CD4-positive, alpha-beta T cell (primary cell): ENCODE measurements at regions of chr1 and their contacts with region 1.

Region 1: DNA sequence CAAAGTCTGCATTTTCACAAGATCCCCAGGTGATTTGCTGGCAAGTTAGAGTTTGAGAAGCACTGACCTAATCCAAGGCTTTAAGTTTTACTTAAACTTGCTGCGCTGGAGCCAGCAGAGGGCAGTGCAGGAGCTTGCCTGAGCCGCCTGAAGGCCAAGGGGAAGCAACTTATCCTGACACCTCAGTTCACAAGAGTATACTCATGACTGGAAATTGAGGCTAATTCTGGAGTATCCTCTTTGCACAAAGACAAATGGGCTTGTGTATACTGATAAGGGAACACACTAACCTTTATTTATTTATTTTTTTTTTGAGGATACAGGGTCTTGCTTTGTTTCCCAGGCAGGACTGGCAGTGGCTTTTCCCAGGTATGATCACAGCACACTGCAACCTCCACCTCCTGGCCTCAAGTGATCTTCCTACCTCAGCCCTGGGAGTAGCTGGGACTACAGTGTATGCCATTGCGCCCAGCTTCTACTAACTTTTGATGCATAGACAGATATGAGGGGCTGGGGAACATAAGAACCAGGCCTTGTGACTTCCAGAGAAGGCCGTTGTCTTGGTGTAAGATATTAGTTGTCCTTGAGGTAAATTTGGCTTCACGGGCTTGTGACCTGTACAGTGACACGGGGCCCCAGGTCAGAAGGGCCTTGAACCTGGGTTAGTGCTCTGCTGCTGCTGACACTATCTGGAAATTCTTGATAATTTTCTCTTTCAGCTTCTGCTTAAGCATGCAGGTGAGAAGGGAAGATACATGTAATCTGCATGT is 29.0 kb upstream of the SLAMF1 start:
- DNase-seq: peak; percentile 57 to 88 (median 72)
- ATAC-seq: peak; percentile 80
- H3K4me3 ChIP-seq: no peak overlapping the region
- H3K4me3 Mint-ChIP-seq: peak overlapping the region; percentile 42
- H3K27ac ChIP-seq: peak overlapping the region; percentile 37 to 38
- H3K27ac Mint-ChIP-seq: no peak overlapping the region
- H3K4me1 ChIP-seq: peaks cover 40% of the 10 kb centered on the region
- H3K4me1 Mint-ChIP-seq: peaks cover 5% of the 10 kb centered on the region
- H3K27me3 ChIP-seq: no peaks in the 10 kb centered on the region
- H3K27me3 Mint-ChIP-seq: no peaks in the 10 kb centered on the region
- CTCF ChIP-seq: peak; percentile 79

Region 2: DNA sequence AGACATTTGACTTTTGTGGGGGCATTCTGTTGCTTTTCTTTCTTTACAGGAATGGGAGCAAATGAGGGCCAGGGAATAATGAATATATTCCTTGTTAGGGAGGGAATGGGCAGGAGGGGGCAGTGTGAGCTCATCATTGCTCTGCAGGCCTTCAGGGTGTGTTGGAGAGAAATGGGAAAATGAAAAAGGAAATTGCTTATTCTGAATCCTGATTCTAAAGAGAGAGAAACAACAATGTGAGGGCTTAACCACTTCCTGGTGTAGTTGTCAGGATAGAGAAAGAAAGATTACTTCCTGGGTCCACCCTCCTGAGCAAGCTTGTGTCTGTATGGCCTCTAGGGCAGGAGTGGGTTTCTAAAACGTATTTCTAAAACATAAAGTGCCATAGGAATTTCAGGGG is 247.2 kb before region 1 on chr1:
- CTCF ChIA-PET with region 1: interaction called, 4 read pairs
- POLR2A ChIA-PET with region 1: interaction called, 5 read pairs
- intact Hi-C with region 1: loop called in 1 of 2 experiments (anchors 5 kb)
- DNase-seq: peak in 10 of 14 experiments; percentile 15 to 82 (median 42)
- ATAC-seq: peak; percentile 76
- H3K4me3 ChIP-seq: no peak overlapping the region
- H3K4me3 Mint-ChIP-seq: peak overlapping the region; percentile 72
- H3K27ac ChIP-seq: peak overlapping the region; percentile 47 to 74
- H3K27ac Mint-ChIP-seq: peak overlapping the region; percentile 88
- H3K4me1 ChIP-seq: peaks cover 52% of the 10 kb centered on the region
- H3K4me1 Mint-ChIP-seq: peaks cover 63% of the 10 kb centered on the region
- H3K27me3 ChIP-seq: no peaks in the 10 kb centered on the region
- H3K27me3 Mint-ChIP-seq: no peaks in the 10 kb centered on the region
- CTCF ChIP-seq: peak; percentile 86

Region 3: DNA sequence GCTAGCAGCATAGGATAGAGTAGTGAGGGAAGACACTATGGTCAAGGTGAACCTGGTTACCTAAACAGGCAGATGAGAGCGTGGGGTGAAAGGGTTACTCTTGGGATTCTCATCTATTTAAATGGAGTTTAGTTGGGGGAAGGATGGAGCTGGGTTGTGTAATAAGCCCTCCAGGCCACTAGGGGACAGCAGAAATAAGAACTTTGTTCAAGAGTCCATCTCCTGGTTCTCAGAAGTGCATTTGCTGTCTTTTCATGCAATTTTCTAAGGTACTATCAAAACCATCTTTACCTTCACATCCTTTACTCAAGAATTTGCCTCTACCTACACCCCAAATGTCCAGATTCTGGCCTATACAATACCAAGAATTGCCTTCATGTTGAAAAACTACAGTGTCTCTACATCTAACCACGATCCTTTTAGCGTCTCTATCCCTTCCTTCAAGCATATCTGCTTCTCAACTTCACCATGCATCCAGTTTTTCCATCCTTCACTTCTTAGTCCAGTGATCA is 57.0 kb before region 1 on chr1:
- CTCF ChIA-PET with region 1: interaction called, 37 read pairs
- POLR2A ChIA-PET with region 1: interaction called, 26 read pairs
- intact Hi-C with region 1: loop called (anchors 2 kb)
- DNase-seq: peak in 8 of 14 experiments; percentile 19 to 79 (median 44)
- ATAC-seq: peak; percentile 67
- H3K4me3 ChIP-seq: no peak overlapping the region
- H3K4me3 Mint-ChIP-seq: no peak overlapping the region
- H3K27ac ChIP-seq: no peak overlapping the region
- H3K27ac Mint-ChIP-seq: peak overlapping the region; percentile 42
- H3K4me1 ChIP-seq: peaks cover 44% of the 10 kb centered on the region
- H3K4me1 Mint-ChIP-seq: peaks cover 84% of the 10 kb centered on the region
- H3K27me3 ChIP-seq: no peaks in the 10 kb centered on the region
- H3K27me3 Mint-ChIP-seq: no peaks in the 10 kb centered on the region
- CTCF ChIP-seq: peak; percentile 80

Region 4: GRCh38 chr1:160629286-160630210 is 46.3 kb before region 1 on chr1:
- CTCF ChIA-PET with region 1: interaction called, 5 read pairs
- POLR2A ChIA-PET with region 1: interaction called, 74 read pairs
- intact Hi-C with region 1: no loop called
- DNase-seq: peak; percentile 64 to 94 (median 74)
- ATAC-seq: peak; percentile 82
- H3K4me3 ChIP-seq: peak overlapping the region; percentile 27
- H3K4me3 Mint-ChIP-seq: peak overlapping the region; percentile 84
- H3K27ac ChIP-seq: peak overlapping the region; percentile 90 to 93
- H3K27ac Mint-ChIP-seq: peak overlapping the region; percentile 97
- H3K4me1 ChIP-seq: peaks cover 96% of the 10 kb centered on the region
- H3K4me1 Mint-ChIP-seq: peaks cover 100% of the 10 kb centered on the region
- H3K27me3 ChIP-seq: no peaks in the 10 kb centered on the region
- H3K27me3 Mint-ChIP-seq: no peaks in the 10 kb centered on the region
- CTCF ChIP-seq: no peak

Region 5: DNA sequence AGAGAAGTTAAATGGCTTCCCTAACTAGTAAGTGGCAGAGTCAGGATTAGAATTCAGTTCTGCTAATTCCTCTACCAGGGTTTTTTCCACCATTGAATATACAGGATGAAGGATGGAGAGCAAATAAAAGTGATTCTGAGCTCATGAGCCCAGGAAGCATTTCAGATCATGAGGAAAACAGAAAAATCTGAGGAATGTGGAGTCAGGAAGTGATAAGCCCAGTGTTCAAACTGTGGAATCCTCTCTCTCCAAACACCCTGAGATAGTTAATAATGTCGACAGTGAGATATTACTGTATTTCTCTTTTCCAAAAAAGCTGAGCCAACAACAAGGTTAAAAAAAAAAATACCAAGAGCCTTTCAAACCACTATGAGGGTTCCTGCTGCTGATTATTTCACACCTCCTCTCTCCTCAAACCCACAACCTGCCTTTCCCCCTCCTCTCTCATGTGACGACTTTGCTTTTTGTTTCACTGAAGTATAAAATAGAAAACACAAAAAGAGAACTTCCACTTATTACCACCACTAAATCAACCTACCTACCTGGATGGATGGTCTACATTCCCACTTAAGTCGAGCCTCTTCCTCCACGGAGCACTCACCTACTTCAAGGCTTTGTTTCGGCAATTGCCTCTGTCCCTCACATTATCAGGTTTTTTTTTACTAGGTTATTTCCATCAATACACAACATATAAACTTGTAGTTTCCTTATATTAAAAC is 37.8 kb before region 1 on chr1:
- CTCF ChIA-PET with region 1: interaction called, 8 read pairs
- POLR2A ChIA-PET with region 1: interaction called, 9 read pairs
- intact Hi-C with region 1: loop called in 1 of 2 experiments (anchors 2 kb)
- DNase-seq: peak in 7 of 14 experiments; percentile 26 to 93 (median 54)
- ATAC-seq: peak; percentile 80
- H3K4me3 ChIP-seq: peak overlapping the region; percentile 27
- H3K4me3 Mint-ChIP-seq: peak overlapping the region; percentile 86
- H3K27ac ChIP-seq: peak overlapping the region; percentile 71 to 72
- H3K27ac Mint-ChIP-seq: peak overlapping the region; percentile 97
- H3K4me1 ChIP-seq: peaks cover 90% of the 10 kb centered on the region
- H3K4me1 Mint-ChIP-seq: peaks cover 97% of the 10 kb centered on the region
- H3K27me3 ChIP-seq: no peaks in the 10 kb centered on the region
- H3K27me3 Mint-ChIP-seq: no peaks in the 10 kb centered on the region
- CTCF ChIP-seq: no peak

Region 6: GRCh38 chr1:160646711-160647328 is 29.0 kb before region 1 on chr1 and contains the start of gene SLAMF1:
- CTCF ChIA-PET with region 1: interaction called, 27 read pairs
- POLR2A ChIA-PET with region 1: interaction called, 42 read pairs
- intact Hi-C with region 1: loop called in 1 of 2 experiments (anchors 2 kb)
- DNase-seq: peak in 6 of 14 experiments; percentile 22 to 78 (median 66)
- ATAC-seq: peak; percentile 77
- H3K4me3 ChIP-seq: peak within 1 kb of the TSS; percentile 69
- H3K4me3 Mint-ChIP-seq: peak within 1 kb of the TSS; percentile 97
- H3K27ac ChIP-seq: peak within 1 kb of the TSS; percentile 68 to 76
- H3K27ac Mint-ChIP-seq: peak within 1 kb of the TSS; percentile 97
- H3K4me1 ChIP-seq: peaks cover 36% of the 10 kb centered on the region
- H3K4me1 Mint-ChIP-seq: peaks cover 78% of the 10 kb centered on the region
- H3K27me3 ChIP-seq: no peaks in the 10 kb centered on the region
- H3K27me3 Mint-ChIP-seq: no peaks in the 10 kb centered on the region
- CTCF ChIP-seq: no peak
- total RNA-seq, gene SLAMF1: 39.4 to 39.8 TPM

Region 7: DNA sequence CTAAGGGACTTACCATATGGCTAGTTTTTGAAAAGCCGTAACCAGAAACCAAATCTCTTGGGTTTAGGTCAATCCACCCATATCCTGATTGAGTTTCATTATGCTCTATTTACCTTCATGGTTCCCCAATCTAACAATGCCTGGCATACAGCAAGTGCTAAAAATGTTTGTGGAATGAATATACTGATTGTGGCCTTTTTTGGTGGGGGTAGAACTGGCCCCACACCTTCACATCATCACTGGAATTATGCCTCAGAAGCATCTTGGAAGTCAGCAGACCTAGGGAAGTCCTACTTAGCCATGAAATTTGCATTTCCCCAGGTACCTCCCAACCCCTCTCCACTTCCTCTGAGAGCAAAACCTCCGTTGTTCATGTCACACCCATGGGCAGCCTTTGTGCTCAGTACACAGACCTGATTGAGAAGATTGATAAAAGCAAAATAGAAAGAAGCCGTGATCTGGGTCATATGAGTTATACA is 11.2 kb before region 1 on chr1:
- CTCF ChIA-PET with region 1: interaction called, 13 read pairs
- POLR2A ChIA-PET with region 1: interaction called, 18 read pairs
- intact Hi-C with region 1: loop called in 1 of 2 experiments (anchors 1 kb)
- DNase-seq: peak in 4 of 14 experiments; percentile 53 to 84 (median 74)
- ATAC-seq: peak; percentile 83
- H3K4me3 ChIP-seq: peak overlapping the region; percentile 13
- H3K4me3 Mint-ChIP-seq: peak overlapping the region; percentile 64
- H3K27ac ChIP-seq: peak overlapping the region; percentile 37 to 79
- H3K27ac Mint-ChIP-seq: peak overlapping the region; percentile 78
- H3K4me1 ChIP-seq: peaks cover 45% of the 10 kb centered on the region
- H3K4me1 Mint-ChIP-seq: peaks cover 74% of the 10 kb centered on the region
- H3K27me3 ChIP-seq: no peaks in the 10 kb centered on the region
- H3K27me3 Mint-ChIP-seq: no peaks in the 10 kb centered on the region
- CTCF ChIP-seq: no peak